A673 (cell line): ENCODE measurements at regions of chr13 and their contacts with region 1.

Region 1: DNA sequence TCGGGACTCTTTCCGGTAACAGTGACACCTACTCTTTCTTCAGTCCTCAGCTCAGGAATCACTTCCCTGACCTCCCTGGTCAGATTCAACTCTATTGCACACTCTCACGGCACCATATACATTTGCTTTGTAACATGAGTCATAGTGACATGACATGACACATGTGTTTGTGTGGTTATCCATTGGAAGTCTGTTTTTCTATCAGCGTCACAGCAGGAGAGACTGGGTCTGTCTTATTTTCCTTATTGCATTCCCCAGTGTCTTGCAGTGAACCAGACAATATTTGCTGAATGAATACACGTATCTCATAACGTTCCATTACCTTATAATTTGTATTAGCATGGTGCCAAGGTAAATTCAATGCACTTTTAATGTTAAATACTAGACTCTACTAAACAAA is 102.0 kb downstream of the DCLK1 start:
- DNase-seq: no peak
- H3K4me3 ChIP-seq: no peak overlapping the region
- H3K27ac ChIP-seq: no peak overlapping the region
- H3K4me1 ChIP-seq: peaks cover 20% of the 10 kb centered on the region
- H3K27me3 ChIP-seq: no peaks in the 10 kb centered on the region
- CTCF ChIP-seq: no peak

Region 2: DNA sequence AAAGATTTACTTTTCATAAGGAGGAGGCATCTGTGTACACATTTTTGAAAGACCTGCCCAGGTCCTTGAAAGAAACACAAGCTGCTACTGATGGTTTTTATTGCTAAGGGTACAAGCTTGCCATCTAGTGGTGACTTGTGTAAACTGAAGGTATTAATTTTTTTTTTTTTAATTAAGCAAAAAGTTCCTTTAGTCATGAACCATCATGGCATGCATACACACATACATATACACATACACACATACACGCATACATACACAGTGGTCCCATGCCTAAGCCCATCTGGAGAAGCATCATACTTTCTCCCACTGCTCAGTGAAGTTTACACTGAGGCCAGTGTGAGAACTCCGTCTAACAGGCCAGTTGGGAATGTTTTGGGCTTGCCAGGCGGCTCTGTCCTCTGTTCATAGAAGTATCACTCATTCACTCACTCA is 210.5 kb before region 1 on chr13:
- CTCF ChIA-PET with region 1: interaction called, 14 read pairs
- POLR2A ChIA-PET with region 1: no interaction called
- intact Hi-C with region 1: no loop called
- DNase-seq: peak; percentile 50
- H3K4me3 ChIP-seq: no peak overlapping the region
- H3K27ac ChIP-seq: no peak overlapping the region
- H3K4me1 ChIP-seq: peaks cover 10% of the 10 kb centered on the region
- H3K27me3 ChIP-seq: no peaks in the 10 kb centered on the region
- CTCF ChIP-seq: peak; percentile 72

Region 3: DNA sequence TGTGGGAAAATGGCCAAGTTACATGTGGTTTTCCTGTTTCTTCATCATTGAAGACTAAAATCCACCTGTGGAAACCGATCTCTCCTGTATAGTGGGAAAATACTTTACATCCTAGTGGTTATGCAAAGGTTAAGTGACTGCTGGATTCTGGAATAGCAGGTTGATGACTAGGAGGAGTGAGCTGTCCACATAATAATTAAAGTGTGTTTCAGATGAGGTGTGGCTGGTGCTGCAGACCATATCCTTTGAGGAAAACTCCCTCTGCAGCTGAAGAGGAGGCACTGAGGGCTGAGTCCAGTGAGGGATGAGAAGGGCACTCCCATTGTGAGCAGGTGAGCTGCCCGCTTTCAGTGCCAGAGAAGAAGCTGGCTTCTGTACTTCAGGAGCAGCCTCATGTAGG is 58.8 kb after region 1 on chr13:
- CTCF ChIA-PET with region 1: no interaction called
- POLR2A ChIA-PET with region 1: no interaction called
- intact Hi-C with region 1: no loop called
- DNase-seq: no peak
- H3K4me3 ChIP-seq: no peak overlapping the region
- H3K27ac ChIP-seq: no peak overlapping the region
- H3K4me1 ChIP-seq: peaks cover 5% of the 10 kb centered on the region
- H3K27me3 ChIP-seq: no peaks in the 10 kb centered on the region
- CTCF ChIP-seq: no peak